Naive thymus-derived CD4-positive, alpha-beta T cell (primary cell): ENCODE measurements at regions of chr14 and their contacts with region 1.

Region 1: GRCh38 chr14:24160850-24161804 is at the start of gene IRF9:
- DNase-seq: peak; percentile 93 to 98 (median 96)
- ATAC-seq: peak; percentile 98
- H3K4me3 ChIP-seq: peak within 1 kb of the TSS; percentile 89
- H3K4me3 Mint-ChIP-seq: peak within 1 kb of the TSS; percentile 95 to 100 (median 100)
- H3K27ac ChIP-seq: peak within 1 kb of the TSS; percentile 99
- H3K27ac Mint-ChIP-seq: peak within 1 kb of the TSS; percentile 98 to 100 (median 100)
- H3K4me1 ChIP-seq: peaks cover 34 to 45% of the 10 kb centered on the region in 2 donors
- H3K4me1 Mint-ChIP-seq: peaks cover 38 to 69% (median 56%) of the 10 kb centered on the region in 7 donors
- H3K27me3 ChIP-seq: no peaks in the 10 kb centered on the region
- H3K27me3 Mint-ChIP-seq: peaks cover 0 to 4% (median 0%) of the 10 kb centered on the region in 5 donors
- total RNA-seq, gene IRF9: 133 to 337 (median 189) TPM

Region 2: DNA sequence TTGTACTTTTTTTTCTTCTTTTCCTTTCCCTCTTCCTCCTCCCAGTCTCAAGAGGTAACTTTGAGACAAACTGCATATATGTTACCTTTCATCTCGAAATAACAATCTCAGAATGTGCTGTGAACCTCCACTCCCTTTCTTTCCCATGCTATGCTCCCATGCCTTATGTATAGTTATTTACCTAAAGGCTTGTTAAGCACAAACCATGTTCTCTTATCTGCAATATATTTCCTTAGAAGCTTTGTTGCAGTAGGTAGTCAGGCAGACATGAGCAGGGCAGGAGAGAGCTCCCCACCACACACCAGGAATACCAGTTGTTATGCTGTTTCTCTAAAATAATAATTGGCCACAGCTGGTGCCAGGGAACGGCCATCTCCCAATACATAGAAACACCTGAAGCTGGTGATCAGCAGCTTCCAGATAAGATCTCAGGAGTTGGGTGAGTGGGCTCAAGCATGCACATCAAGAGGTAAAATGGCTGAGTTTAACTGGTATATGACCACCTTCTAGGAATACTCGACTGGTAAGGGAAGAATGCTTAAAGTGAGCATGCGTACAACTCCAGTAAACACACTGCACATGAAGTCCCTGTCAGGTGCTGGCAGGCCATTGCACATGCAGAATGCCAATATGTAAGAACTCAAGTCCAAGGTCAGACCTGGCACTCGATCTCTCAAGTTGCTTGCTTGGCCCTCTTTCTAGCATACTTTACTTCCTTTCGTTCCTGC is 539.8 kb before region 1 on chr14:
- CTCF ChIA-PET with region 1: no interaction called
- POLR2A ChIA-PET with region 1: no interaction called
- intact Hi-C with region 1: no loop called
- DNase-seq: no peak
- ATAC-seq: no peak
- H3K4me3 ChIP-seq: no peak overlapping the region
- H3K4me3 Mint-ChIP-seq: no peak overlapping the region
- H3K27ac ChIP-seq: no peak overlapping the region
- H3K27ac Mint-ChIP-seq: peak overlapping the region in 1 of 9 donors; percentile 49
- H3K4me1 ChIP-seq: no peaks in the 10 kb centered on the region
- H3K4me1 Mint-ChIP-seq: peaks cover 0 to 10% (median 0%) of the 10 kb centered on the region in 7 donors
- H3K27me3 ChIP-seq: no peaks in the 10 kb centered on the region
- H3K27me3 Mint-ChIP-seq: peaks cover 0 to 23% (median 9%) of the 10 kb centered on the region in 5 donors

Region 3: DNA sequence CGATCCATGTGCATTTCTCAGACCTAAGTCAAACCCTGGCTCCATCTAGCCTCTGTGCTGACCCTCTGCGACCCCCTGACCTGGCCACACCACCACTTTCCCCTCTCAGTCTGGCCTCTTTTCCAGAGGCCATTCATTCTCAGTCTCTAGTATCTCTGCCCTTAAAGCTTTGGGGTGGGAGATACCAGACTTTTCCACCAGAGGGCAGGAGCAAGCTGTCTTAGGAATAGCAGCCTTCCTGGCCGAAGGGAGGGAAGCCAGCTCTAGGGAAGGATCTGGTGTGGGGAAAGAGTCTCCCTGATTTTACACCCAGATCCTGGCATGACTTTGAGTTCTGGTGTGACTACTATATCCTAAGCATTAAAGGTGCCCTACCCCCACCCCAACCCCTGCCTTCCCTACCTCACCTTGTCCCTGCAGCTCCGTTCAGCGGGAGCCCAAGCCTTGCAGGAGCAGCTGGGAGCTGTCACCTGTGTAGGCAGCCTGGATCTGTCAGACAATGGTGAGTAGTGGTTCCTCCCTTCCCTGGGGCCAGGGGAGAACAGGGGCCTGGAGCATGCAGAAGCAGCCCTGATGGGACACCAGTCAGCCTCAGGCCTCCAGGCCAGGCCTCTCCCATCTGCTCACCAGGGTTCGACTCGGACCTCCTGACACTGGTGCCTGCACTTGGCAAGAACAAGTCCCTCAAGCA is 102.7 kb before region 1 on chr14:
- CTCF ChIA-PET with region 1: interaction called, 20 read pairs
- POLR2A ChIA-PET with region 1: no interaction called
- intact Hi-C with region 1: loop called (anchors 1 kb)
- DNase-seq: peak; percentile 22 to 70 (median 49)
- ATAC-seq: peak; percentile 84
- H3K4me3 ChIP-seq: no peak overlapping the region
- H3K4me3 Mint-ChIP-seq: no peak overlapping the region
- H3K27ac ChIP-seq: no peak overlapping the region
- H3K27ac Mint-ChIP-seq: peak overlapping the region in 5 of 9 donors; percentile 22 to 80 (median 67)
- H3K4me1 ChIP-seq: no peaks in the 10 kb centered on the region
- H3K4me1 Mint-ChIP-seq: peaks cover 0 to 8% (median 2%) of the 10 kb centered on the region in 7 donors
- H3K27me3 ChIP-seq: no peaks in the 10 kb centered on the region
- H3K27me3 Mint-ChIP-seq: peaks cover 0 to 8% (median 2%) of the 10 kb centered on the region in 5 donors

Region 4: DNA sequence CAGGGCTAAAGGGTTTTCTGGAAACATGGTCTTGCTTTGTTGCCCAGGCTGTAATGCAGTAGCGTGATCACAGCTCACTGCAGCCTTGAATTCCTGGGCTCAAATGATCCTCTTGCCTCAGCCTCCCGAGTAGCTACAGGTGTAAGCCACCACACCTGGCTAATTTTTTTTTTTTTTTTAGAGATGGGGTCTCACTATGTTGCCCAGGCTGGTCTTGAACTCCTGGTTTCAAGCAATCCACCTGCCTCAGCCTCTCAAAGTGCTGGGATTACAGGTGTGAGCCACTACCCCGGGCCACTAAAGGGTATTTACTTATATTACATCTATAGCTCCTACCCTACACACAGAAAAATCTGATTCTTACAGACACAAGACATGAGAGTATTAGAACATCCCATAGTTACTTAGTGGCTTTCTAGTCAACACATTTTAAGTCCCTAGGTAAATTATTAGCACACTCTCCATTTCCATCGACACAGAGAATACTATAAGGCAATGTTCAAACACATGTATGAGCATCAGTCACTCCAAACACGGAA is 52.7 kb before region 1 on chr14:
- CTCF ChIA-PET with region 1: interaction called, 19 read pairs
- POLR2A ChIA-PET with region 1: interaction called, 56 read pairs
- intact Hi-C with region 1: loop called in 1 of 2 experiments (anchors 1 kb)
- DNase-seq: no peak
- ATAC-seq: peak; percentile 21
- H3K4me3 ChIP-seq: no peak overlapping the region
- H3K4me3 Mint-ChIP-seq: peak overlapping the region; percentile 3 to 68 (median 46)
- H3K27ac ChIP-seq: peak overlapping the region; percentile 66
- H3K27ac Mint-ChIP-seq: peak overlapping the region; percentile 90 to 97 (median 94)
- H3K4me1 ChIP-seq: peaks cover 11 to 12% of the 10 kb centered on the region in 2 donors
- H3K4me1 Mint-ChIP-seq: peaks cover 9 to 28% (median 13%) of the 10 kb centered on the region in 7 donors
- H3K27me3 ChIP-seq: no peaks in the 10 kb centered on the region
- H3K27me3 Mint-ChIP-seq: no peaks in the 10 kb centered on the region

Region 5: DNA sequence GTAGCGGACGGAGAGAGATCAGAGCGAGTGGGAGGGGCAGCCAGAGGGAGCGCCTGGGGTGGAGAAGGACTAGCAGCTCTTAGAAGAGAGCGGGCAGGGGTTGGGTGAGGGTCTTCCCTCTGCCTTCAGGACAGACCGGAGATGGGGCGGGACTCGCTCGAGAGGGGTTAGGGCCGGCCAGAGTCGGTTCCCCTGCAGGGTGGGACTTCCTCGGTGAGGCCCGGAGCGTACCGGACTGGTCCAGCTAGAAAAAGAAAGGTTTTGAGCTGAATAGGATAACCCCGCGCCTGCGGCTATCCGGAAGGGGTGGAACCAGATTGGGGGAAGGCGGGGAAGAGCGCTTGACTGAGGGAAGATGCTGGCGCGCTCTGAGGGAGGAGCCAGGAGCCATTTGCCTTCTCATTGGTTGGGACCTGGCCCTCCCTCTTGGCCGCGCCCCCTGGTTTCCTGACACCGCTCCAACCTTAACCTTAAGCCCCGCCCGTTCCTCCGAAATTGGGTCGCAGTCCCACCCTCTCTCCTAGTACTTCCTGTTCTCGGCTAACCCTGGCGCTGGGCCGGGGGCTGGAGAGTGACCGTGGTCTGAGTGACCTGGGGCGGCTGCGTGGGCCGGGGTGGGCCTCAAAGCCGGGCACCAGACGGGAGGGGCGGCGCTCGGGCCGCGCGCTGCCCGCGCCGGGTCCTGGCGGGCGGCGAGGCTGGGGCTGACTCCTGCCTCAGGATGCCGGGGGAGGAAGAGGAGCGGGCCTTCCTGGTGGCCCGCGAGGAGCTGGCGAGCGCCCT is 14.0 kb before region 1 on chr14 and contains the start of gene RNF31:
- CTCF ChIA-PET with region 1: interaction called, 36 read pairs
- POLR2A ChIA-PET with region 1: interaction called, 37 read pairs
- intact Hi-C with region 1: loop called (anchors 1 kb)
- DNase-seq: peak; percentile 88 to 98 (median 96)
- ATAC-seq: peak; percentile 95
- H3K4me3 ChIP-seq: peak within 1 kb of the TSS; percentile 98
- H3K4me3 Mint-ChIP-seq: peak within 1 kb of the TSS; percentile 91 to 100 (median 98)
- H3K27ac ChIP-seq: peak within 1 kb of the TSS; percentile 88
- H3K27ac Mint-ChIP-seq: peak within 1 kb of the TSS; percentile 94 to 98 (median 96)
- H3K4me1 ChIP-seq: peaks cover 35 to 47% of the 10 kb centered on the region in 2 donors
- H3K4me1 Mint-ChIP-seq: peaks cover 39 to 73% (median 61%) of the 10 kb centered on the region in 7 donors
- H3K27me3 ChIP-seq: no peaks in the 10 kb centered on the region
- H3K27me3 Mint-ChIP-seq: no peaks in the 10 kb centered on the region
- total RNA-seq, gene RNF31: 64.0 to 151 (median 95.4) TPM

Region 6: DNA sequence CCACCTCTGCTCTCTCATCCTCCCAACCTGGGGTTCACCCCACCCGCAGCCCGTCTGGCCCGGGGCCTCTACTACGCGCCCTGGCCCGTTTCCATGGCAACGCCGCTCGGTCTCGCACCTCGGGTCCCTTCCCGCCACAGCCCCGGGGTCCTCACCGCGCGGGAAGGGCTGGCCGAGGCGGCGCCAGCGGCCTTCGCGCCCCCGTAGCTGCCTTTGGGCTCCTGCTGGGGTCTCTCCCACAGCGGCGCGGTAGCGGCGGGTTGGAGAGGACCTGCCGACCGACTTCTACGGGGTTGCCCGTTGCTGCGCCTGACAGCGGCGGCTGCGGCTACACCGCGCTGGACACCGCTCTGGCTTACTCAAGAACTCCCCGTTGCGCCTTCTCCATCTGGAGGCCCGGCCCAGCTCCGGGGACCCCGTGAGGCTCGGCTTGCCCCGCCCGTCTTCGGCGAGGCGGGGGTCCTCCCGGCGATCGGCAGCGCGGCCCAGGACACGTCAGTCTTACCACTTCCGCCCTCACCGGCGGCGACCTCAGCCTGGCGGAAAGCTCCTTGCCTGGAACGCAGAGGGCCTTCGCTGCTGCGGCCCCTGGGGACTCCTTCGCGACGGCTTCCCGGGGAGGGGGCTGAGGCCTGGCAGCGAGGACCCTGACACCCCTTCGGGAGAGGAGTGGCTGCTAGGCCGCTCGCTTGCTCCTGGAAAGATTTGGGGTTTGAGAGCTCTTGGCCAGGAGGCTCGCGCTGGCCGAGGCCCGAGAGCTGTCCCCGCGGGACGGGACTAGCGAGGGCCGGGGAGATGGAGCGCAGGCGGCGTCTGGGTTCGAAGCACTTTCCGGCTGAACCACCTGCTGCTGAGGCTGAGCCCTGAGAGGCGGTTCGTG is 34.3 kb after region 1 on chr14 and contains the start of gene TM9SF1:
- CTCF ChIA-PET with region 1: interaction called, 3 read pairs
- POLR2A ChIA-PET with region 1: interaction called, 22 read pairs
- intact Hi-C with region 1: loop called (anchors 1 kb)
- DNase-seq: peak; percentile 86 to 92 (median 90)
- ATAC-seq: peak; percentile 90
- H3K4me3 ChIP-seq: peak within 1 kb of the TSS; percentile 74
- H3K4me3 Mint-ChIP-seq: peak within 1 kb of the TSS; percentile 88 to 97 (median 93)
- H3K27ac ChIP-seq: peak within 1 kb of the TSS; percentile 99
- H3K27ac Mint-ChIP-seq: peak within 1 kb of the TSS; percentile 88 to 98 (median 98)
- H3K4me1 ChIP-seq: peaks cover 14 to 16% of the 10 kb centered on the region in 2 donors
- H3K4me1 Mint-ChIP-seq: peaks cover 38 to 69% (median 59%) of the 10 kb centered on the region in 7 donors
- H3K27me3 ChIP-seq: no peaks in the 10 kb centered on the region
- H3K27me3 Mint-ChIP-seq: no peaks in the 10 kb centered on the region
- total RNA-seq, gene TM9SF1: 16.2 to 40.5 (median 19.2) TPM

Region 7: GRCh38 chr14:24241829-24242443 is 80.8 kb after region 1 on chr14:
- CTCF ChIA-PET with region 1: no interaction called
- POLR2A ChIA-PET with region 1: interaction called, 13 read pairs
- intact Hi-C with region 1: loop called (anchors 1 kb)
- DNase-seq: peak in 7 of 9 donors; percentile 94 to 98 (median 97)
- ATAC-seq: peak; percentile 89
- H3K4me3 ChIP-seq: peak overlapping the region; percentile 78
- H3K4me3 Mint-ChIP-seq: peak overlapping the region; percentile 84 to 99 (median 98)
- H3K27ac ChIP-seq: peak overlapping the region; percentile 98
- H3K27ac Mint-ChIP-seq: peak overlapping the region; percentile 98 to 100 (median 100)
- H3K4me1 ChIP-seq: peaks cover 40 to 41% of the 10 kb centered on the region in 2 donors
- H3K4me1 Mint-ChIP-seq: peaks cover 42 to 71% (median 62%) of the 10 kb centered on the region in 7 donors
- H3K27me3 ChIP-seq: no peaks in the 10 kb centered on the region
- H3K27me3 Mint-ChIP-seq: no peaks in the 10 kb centered on the region

Region 8: DNA sequence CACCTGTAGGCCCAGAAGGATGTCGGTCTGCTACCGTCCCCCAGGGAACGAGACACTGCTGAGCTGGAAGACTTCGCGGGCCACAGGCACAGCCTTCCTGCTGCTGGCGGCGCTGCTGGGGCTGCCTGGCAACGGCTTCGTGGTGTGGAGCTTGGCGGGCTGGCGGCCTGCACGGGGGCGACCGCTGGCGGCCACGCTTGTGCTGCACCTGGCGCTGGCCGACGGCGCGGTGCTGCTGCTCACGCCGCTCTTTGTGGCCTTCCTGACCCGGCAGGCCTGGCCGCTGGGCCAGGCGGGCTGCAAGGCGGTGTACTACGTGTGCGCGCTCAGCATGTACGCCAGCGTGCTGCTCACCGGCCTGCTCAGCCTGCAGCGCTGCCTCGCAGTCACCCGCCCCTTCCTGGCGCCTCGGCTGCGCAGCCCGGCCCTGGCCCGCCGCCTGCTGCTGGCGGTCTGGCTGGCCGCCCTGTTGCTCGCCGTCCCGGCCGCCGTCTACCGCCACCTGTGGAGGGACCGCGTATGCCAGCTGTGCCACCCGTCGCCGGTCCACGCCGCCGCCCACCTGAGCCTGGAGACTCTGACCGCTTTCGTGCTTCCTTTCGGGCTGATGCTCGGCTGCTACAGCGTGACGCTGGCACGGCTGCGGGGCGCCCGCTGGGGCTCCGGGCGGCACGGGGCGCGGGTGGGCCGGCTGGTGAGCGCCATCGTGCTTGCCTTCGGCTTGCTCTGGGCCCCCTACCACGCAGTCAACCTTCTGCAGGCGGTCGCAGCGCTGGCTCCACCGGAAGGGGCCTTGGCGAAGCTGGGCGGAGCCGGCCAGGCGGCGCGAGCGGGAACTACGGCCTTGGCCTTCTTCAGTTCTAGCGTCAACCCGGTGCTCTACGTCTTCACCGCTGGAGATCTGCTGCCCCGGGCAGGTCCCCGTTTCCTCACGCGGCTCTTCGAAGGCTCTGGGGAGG is 149.8 kb after region 1 on chr14 and contains the start of gene LTB4R:
- CTCF ChIA-PET with region 1: no interaction called
- POLR2A ChIA-PET with region 1: no interaction called
- intact Hi-C with region 1: loop called in 1 of 2 experiments (anchors 1 kb)
- DNase-seq: peak; percentile 61 to 79 (median 73)
- ATAC-seq: peak; percentile 85
- H3K4me3 ChIP-seq: peak within 1 kb of the TSS; percentile 50
- H3K4me3 Mint-ChIP-seq: peak within 1 kb of the TSS; percentile 77 to 91 (median 85)
- H3K27ac ChIP-seq: peak within 1 kb of the TSS; percentile 76
- H3K27ac Mint-ChIP-seq: peak within 1 kb of the TSS; percentile 86 to 95 (median 89)
- H3K4me1 ChIP-seq: peaks cover 60 to 65% of the 10 kb centered on the region in 2 donors
- H3K4me1 Mint-ChIP-seq: peaks cover 58 to 79% (median 72%) of the 10 kb centered on the region in 7 donors
- H3K27me3 ChIP-seq: no peaks in the 10 kb centered on the region
- H3K27me3 Mint-ChIP-seq: no peaks in the 10 kb centered on the region
- total RNA-seq, gene LTB4R: 14.1 to 28.8 (median 26.3) TPM